ENCODE measurements at regions of chr4 and their contacts with region 1.

Region 1: DNA sequence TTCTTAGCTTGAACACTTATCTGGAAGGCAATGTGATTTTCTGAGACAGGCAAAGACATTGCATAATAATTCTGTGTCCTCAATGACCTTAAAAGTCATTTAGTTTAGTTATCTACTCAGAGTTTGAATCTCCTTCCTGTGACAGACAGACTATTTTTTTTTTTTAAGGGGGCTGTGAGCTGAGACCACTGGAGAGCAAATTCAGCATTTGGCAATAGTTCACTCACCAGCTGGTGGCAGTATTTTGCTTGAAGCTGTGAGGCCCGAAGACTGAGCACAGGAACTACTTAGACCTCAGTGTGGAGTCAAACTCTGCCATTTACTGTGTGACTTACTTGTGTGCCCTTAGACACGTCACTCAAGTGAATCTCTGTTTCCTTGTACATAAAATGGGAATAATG is 22.9 kb upstream of the CPE start:
- DNase-seq: peak; percentile 41 to 60
- H3K4me3 ChIP-seq: no peak overlapping the region
- H3K27ac ChIP-seq: no peak overlapping the region
- H3K4me1 ChIP-seq: no peaks in the 10 kb centered on the region
- H3K27me3 ChIP-seq: no peaks in the 10 kb centered on the region
- CTCF ChIP-seq: peak in 4 of 6 experiments; percentile 35 to 74 (median 61)
- POLR2A ChIP-seq: no peak

Region 2: GRCh38 chr4:165464813-165465381 is 109.0 kb after region 1 on chr4:
- intact Hi-C with region 1: loop called (anchors 5 kb)
- DNase-seq: peak in 1 of 2 donors; percentile 15
- H3K4me3 ChIP-seq: no peak overlapping the region
- H3K27ac ChIP-seq: no peak overlapping the region
- H3K4me1 ChIP-seq: no peaks in the 10 kb centered on the region
- H3K27me3 ChIP-seq: no peaks in the 10 kb centered on the region
- CTCF ChIP-seq: peak; percentile 43 to 84 (median 76)
- POLR2A ChIP-seq: no peak

Measured in thyroid gland (tissue), 4 donors.